HCT116 (cell line): ENCODE measurements at regions of chr16 and their contacts with region 1.

Region 1: DNA sequence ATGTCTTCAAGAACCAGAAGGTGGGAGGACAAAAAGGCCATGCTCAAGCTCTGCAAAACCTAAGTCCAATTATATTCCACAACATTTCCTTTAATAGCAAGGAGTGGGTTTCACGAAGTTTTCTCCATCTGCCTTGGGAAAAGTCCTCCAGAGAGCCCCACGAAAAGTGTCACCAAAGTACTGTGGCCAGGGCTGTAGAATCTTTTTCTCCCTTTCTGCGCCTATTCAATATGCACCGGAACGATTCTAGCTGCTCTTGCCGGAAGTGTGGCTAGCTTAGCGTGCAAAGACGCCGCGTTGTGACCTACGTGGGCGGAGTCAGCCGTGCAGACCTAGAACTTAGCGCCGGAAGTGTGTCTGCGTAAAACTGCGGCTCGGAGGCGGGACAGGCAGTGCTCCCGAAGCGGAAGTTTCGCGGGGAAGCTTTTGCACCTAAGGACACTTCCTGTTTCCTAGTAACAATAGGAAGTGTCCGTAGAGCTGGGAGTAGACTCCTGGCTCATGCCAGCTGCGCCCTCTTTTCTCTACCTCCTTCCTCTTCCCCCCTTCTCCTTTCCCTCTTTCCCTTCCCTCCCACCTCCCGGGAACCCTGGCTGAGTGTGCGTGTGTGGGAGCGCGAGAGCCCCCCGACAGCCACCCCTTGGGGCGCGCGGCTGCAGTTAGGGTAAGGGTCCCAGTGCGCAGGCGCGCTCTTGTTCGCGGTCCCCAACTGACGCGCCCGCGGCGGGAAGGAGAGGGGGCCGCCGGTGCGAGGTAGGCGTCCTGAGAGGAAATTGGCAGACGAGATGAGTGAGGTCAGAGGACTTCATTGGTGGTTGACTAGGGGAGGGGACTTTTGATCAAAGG is at the starts of genes ZNF646 and ZNF668:
- DNase-seq: peak; percentile 99
- ATAC-seq: peak; percentile 86
- H3K4me3 ChIP-seq: peak within 1 kb of the TSS; percentile 87 to 99
- H3K27ac ChIP-seq: peak within 1 kb of the TSS; percentile 100
- H3K4me1 ChIP-seq: peaks cover 8 to 18% of the 10 kb centered on the region in 2 experiments; a peak in 3 of 4 replicates
- H3K27me3 ChIP-seq: no peaks in the 10 kb centered on the region
- CTCF ChIP-seq: no peak
- POLR2A ChIP-seq: peak; percentile 61
- RAD21 ChIP-seq: no peak
- total RNA-seq, gene ZNF646: 17.7 TPM
- total RNA-seq, gene ZNF668: 16.8 TPM

Region 2: DNA sequence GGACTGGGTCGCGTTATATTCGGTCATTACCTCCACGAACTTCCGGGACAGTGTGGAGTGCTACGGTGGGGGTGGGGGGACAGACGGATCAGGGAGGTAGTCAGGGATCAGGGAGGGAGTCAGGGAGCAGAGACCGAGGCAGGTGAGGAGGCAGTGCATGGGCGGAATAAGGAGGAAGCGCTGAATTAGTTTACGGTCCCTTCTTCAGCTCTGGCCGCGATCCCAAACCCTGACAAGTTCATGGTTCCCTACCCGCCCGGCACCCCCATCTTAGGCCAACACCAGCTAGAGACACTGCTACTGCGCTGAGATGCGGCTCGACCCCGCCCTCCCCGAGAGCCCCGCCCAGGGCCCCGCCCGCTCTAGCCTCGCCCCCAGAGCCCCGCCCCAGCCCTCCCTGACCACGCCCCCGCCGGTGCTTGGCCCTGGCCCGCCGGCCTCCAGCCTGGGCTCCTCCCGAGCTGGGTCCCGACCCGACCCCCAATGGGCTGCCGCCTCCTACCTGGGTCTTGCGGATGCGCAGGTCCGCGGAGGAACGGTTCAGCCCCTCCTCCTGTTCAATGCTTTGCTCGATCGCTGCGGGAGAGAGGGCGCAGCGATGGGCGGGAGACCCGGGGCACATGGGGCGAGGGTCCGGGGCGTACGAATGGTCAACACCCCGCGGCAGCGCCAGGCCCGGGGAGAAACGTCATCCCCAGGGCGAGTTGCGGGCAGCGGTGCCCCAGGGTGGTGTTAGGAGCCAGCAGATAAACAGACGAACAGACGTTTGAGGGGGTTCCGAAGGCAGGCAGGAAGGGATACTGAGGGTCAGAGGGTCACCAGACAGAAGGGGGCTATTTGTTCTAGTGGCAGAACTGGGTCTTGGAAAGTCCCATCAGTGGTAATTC is 76.9 kb before region 1 on chr16:
- CTCF ChIA-PET with region 1: no interaction called
- POLR2A ChIA-PET with region 1: interaction called, 3 read pairs
- RAD21 ChIA-PET with region 1: interaction called in 1 of 2 experiments, 5 read pairs
- intact Hi-C with region 1: loop called (anchors 5 kb)
- DNase-seq: peak; percentile 43
- ATAC-seq: peak; percentile 89
- H3K4me3 ChIP-seq: peak overlapping the region; percentile 72 to 83
- H3K27ac ChIP-seq: peak overlapping the region; percentile 72
- H3K4me1 ChIP-seq: peaks cover 22 to 44% of the 10 kb centered on the region in 2 experiments
- H3K27me3 ChIP-seq: no peaks in the 10 kb centered on the region
- CTCF ChIP-seq: no peak
- POLR2A ChIP-seq: no peak
- RAD21 ChIP-seq: no peak

Region 3: GRCh38 chr16:31032736-31033708 is 41.2 kb before region 1 on chr16 and contains the start of gene STX4:
- CTCF ChIA-PET with region 1: no interaction called
- POLR2A ChIA-PET with region 1: interaction called, 3 read pairs
- RAD21 ChIA-PET with region 1: no interaction called
- intact Hi-C with region 1: loop called (anchors 2 kb)
- DNase-seq: peak; percentile 89
- ATAC-seq: peak; percentile 80
- H3K4me3 ChIP-seq: peak within 1 kb of the TSS; percentile 84 to 98
- H3K27ac ChIP-seq: peak within 1 kb of the TSS; percentile 69
- H3K4me1 ChIP-seq: peaks cover 5 to 15% of the 10 kb centered on the region in 2 experiments
- H3K27me3 ChIP-seq: no peaks in the 10 kb centered on the region
- CTCF ChIP-seq: no peak
- POLR2A ChIP-seq: no peak
- RAD21 ChIP-seq: no peak
- total RNA-seq, gene STX4: 26.0 TPM